ENCODE measurements at regions of chr15 and their contacts with region 1.

Region 1: GRCh38 chr15:92714477-92715401 is 59.2 kb upstream of the FAM174B start:
- DNase-seq: peak; percentile 58 to 83 (median 77)
- ATAC-seq: peak; percentile 93
- H3K4me3 ChIP-seq: peak overlapping the region; percentile 46 to 60
- H3K4me3 Mint-ChIP-seq: peak overlapping the region; percentile 79
- H3K27ac ChIP-seq: no peak overlapping the region
- H3K27ac Mint-ChIP-seq: no peak overlapping the region
- H3K4me1 ChIP-seq: peaks cover 9% of the 10 kb centered on the region
- H3K4me1 Mint-ChIP-seq: peaks cover 9% of the 10 kb centered on the region
- H3K27me3 ChIP-seq: no peaks in the 10 kb centered on the region
- H3K27me3 Mint-ChIP-seq: peaks cover 23% of the 10 kb centered on the region
- CTCF ChIP-seq: peak; percentile 88

Region 2: DNA sequence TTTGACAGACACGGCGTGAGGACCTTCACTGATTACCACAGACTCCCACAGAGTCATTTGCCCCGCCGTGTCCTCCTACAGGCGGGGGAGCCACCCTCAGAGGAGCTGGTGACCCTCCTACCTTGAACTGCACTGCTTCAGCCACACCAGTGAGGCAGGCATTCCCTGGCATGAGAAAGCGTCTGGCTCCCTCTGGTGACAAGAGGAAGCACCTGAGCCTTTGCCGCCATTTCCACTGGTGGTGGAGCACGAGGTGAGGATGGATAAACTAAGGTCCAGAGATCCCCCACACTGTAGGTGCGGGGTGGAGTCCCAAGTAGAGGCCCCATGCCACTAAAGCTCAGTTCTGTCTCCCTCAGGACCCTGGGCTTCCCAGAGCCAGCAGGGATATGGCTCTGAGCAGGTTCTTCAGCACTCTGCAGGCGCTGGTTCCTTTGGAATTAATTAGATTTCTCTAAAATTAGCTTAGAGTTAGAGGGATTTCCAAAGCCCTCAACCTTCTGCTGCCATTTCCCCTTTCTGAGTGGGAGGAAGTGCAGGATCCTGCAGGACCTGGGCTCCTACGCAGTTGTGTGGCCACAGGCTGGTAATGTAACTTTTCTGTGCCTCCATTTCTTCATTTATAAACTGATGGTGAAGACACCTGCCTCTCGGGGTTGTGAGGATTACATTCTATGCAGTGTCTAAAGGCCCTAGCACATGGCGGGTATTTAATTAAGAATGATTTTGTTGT is 637.2 kb before region 1 on chr15:
- CTCF ChIA-PET with region 1: no interaction called
- POLR2A ChIA-PET with region 1: no interaction called
- intact Hi-C with region 1: loop called in 1 of 2 experiments (anchors 5 kb)
- DNase-seq: peak in 8 of 9 experiments; percentile 35 to 67 (median 52)
- ATAC-seq: no peak
- H3K4me3 ChIP-seq: no peak overlapping the region
- H3K4me3 Mint-ChIP-seq: no peak overlapping the region
- H3K27ac ChIP-seq: no peak overlapping the region
- H3K27ac Mint-ChIP-seq: no peak overlapping the region
- H3K4me1 ChIP-seq: peaks cover 7% of the 10 kb centered on the region
- H3K4me1 Mint-ChIP-seq: peaks cover 23% of the 10 kb centered on the region
- H3K27me3 ChIP-seq: no peaks in the 10 kb centered on the region
- H3K27me3 Mint-ChIP-seq: no peaks in the 10 kb centered on the region
- CTCF ChIP-seq: peak; percentile 51

Region 3: DNA sequence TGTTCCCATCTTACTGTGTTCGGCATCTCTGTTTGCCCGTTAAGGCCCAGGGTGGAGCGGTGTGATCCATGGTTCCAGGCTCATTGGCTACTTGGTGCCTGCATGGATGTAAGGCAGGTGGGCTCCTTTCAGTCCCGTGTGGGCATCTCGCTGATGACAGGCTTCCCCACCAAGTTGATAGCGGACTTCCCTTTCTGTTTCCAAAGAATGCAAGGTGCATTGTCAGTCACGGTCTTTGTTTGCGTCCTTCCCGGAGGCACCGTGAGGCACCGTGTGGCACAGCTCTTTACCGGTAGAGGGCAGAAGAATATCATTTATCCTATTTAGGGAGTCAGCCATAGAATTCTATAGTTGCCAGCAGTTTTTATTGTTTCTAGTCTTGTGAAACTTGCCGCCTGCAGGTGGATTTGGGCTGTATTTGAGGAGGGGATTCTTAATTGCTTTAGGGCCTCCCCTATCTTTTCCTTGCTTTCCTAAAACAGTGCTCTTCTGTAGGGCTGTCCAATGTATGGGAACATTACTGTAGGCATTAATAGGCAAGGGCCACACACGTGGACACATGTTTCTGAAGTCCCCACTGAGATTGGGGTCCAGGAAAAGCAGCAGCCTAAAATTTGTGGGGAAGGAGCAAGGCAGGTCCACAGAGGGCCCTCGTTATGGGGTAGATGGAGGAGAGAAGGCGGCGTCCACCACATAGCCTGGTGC is 617.1 kb before region 1 on chr15:
- CTCF ChIA-PET with region 1: interaction called, 12 read pairs
- POLR2A ChIA-PET with region 1: no interaction called
- intact Hi-C with region 1: loop called in 1 of 2 experiments (anchors 1 kb)
- DNase-seq: peak in 7 of 9 experiments; percentile 13 to 68 (median 41)
- ATAC-seq: peak; percentile 48
- H3K4me3 ChIP-seq: no peak overlapping the region
- H3K4me3 Mint-ChIP-seq: peak overlapping the region; percentile 12
- H3K27ac ChIP-seq: no peak overlapping the region
- H3K27ac Mint-ChIP-seq: peak overlapping the region; percentile 25
- H3K4me1 ChIP-seq: peaks cover 26% of the 10 kb centered on the region
- H3K4me1 Mint-ChIP-seq: peaks cover 51% of the 10 kb centered on the region
- H3K27me3 ChIP-seq: no peaks in the 10 kb centered on the region
- H3K27me3 Mint-ChIP-seq: no peaks in the 10 kb centered on the region
- CTCF ChIP-seq: peak; percentile 61

Region 4: DNA sequence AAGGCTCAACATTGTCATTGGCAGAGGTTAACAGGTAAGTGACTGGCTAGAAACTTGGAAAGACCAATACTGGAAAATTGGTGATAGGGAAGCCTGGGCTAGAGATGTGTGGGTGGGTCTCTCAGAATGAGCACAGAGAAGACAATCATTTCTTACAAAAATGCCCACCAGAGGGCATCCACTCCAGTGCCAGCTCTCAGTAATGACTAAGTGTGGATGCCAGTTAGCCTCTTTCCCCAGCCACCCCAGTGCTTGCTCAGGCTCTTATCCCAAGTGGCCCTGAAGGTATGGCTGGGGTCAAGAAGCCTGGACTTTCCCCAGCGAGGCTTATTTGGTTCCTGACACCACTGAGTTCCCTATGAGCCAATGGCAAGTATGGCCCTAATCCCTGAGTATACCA is 437.0 kb before region 1 on chr15:
- CTCF ChIA-PET with region 1: interaction called, 3 read pairs
- POLR2A ChIA-PET with region 1: no interaction called
- intact Hi-C with region 1: loop called in 1 of 2 experiments (anchors 2 kb)
- DNase-seq: peak in 2 of 9 experiments; percentile 2 to 17
- ATAC-seq: no peak
- H3K4me3 ChIP-seq: no peak overlapping the region
- H3K4me3 Mint-ChIP-seq: no peak overlapping the region
- H3K27ac ChIP-seq: no peak overlapping the region
- H3K27ac Mint-ChIP-seq: no peak overlapping the region
- H3K4me1 ChIP-seq: no peaks in the 10 kb centered on the region
- H3K4me1 Mint-ChIP-seq: no peaks in the 10 kb centered on the region
- H3K27me3 ChIP-seq: no peaks in the 10 kb centered on the region
- H3K27me3 Mint-ChIP-seq: peaks cover 12% of the 10 kb centered on the region
- CTCF ChIP-seq: no peak

Region 5: DNA sequence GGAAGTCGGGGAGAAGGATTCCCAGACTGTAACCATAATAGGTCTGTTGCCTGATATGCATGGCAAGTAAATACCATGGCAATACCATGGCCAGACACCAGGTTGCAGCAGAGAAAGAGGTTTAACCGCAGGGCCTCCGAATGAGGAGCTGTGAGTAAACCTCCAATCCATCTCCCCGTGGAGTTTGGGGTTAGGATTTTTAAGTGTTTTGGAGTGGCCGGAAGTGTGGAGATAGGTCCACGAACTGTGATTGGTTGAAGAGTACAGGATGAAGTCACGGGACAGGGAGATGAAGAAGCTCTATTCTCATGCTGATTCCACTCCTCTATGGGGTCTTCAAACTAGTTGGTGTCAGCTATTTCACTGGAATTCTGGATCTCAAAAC is 193.1 kb before region 1 on chr15:
- CTCF ChIA-PET with region 1: interaction called, 20 read pairs
- POLR2A ChIA-PET with region 1: interaction called, 4 read pairs
- intact Hi-C with region 1: loop called in 1 of 2 experiments (anchors 1 kb)
- DNase-seq: peak in 8 of 9 experiments; percentile 5 to 55 (median 32)
- ATAC-seq: peak; percentile 52
- H3K4me3 ChIP-seq: no peak overlapping the region
- H3K4me3 Mint-ChIP-seq: no peak overlapping the region
- H3K27ac ChIP-seq: no peak overlapping the region
- H3K27ac Mint-ChIP-seq: no peak overlapping the region
- H3K4me1 ChIP-seq: no peaks in the 10 kb centered on the region
- H3K4me1 Mint-ChIP-seq: peaks cover 2% of the 10 kb centered on the region
- H3K27me3 ChIP-seq: no peaks in the 10 kb centered on the region
- H3K27me3 Mint-ChIP-seq: no peaks in the 10 kb centered on the region
- CTCF ChIP-seq: peak; percentile 28

Region 6: DNA sequence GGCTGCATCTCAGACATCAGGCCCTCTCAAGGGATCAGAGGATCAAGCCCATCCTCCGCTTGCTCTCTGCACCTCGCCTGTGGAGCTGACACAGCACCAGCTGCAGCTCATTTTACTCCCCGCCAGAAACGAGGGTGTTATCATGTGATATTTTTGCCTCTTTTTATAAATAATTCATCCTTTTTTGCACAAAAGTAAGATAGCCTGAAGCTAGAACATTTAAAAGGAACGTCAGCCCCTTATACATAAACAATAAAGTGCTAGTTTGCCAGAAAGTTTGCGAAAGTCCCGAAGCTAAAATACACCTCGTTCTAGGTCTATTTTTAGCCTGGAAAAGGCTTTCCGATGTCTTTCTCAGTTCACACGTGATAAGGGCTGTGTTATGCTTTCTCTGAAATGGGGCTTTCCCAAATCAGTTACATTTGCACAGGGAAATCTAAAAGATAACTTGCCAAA is 49.6 kb before region 1 on chr15:
- CTCF ChIA-PET with region 1: no interaction called
- POLR2A ChIA-PET with region 1: no interaction called
- intact Hi-C with region 1: no loop called
- DNase-seq: no peak
- ATAC-seq: no peak
- H3K4me3 ChIP-seq: no peak overlapping the region
- H3K4me3 Mint-ChIP-seq: no peak overlapping the region
- H3K27ac ChIP-seq: no peak overlapping the region
- H3K27ac Mint-ChIP-seq: no peak overlapping the region
- H3K4me1 ChIP-seq: no peaks in the 10 kb centered on the region
- H3K4me1 Mint-ChIP-seq: no peaks in the 10 kb centered on the region
- H3K27me3 ChIP-seq: no peaks in the 10 kb centered on the region
- H3K27me3 Mint-ChIP-seq: peaks cover 9% of the 10 kb centered on the region
- CTCF ChIP-seq: no peak

Region 7: DNA sequence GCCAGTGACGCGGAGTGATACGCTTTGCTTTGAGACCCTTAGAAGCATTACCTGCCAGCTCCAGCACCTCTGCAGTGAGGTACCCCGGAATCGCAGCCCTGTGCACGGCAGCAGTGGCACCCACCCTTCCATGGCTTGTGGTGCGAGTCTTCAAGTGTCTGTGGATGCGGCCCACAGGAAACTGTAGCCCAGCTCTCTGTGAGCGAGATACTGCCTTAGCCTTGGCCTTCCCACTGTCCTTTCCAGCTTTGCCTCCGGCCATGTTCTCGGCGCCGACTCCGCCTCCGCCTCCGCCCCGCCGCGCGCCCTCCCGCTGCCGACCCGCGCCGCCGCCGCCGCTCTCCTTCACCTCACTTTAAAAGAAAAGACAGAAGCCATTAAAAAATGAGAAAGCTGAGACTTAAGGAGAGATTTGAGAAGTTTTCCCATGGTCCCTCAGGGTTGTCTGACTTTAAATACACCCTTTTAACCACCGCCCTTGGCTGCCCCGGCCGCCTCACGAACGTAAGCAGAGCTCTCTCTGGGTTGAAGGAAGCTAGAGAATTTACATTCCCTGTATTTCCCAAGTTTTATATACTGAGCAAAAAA is 19.3 kb after region 1 on chr15:
- CTCF ChIA-PET with region 1: interaction called, 14 read pairs
- POLR2A ChIA-PET with region 1: no interaction called
- intact Hi-C with region 1: no loop called
- DNase-seq: peak in 6 of 9 experiments; percentile 14 to 62 (median 28)
- ATAC-seq: peak; percentile 64
- H3K4me3 ChIP-seq: peak overlapping the region; percentile 57 to 70
- H3K4me3 Mint-ChIP-seq: peak overlapping the region; percentile 88
- H3K27ac ChIP-seq: peak overlapping the region; percentile 44 to 60
- H3K27ac Mint-ChIP-seq: peak overlapping the region; percentile 72
- H3K4me1 ChIP-seq: no peaks in the 10 kb centered on the region
- H3K4me1 Mint-ChIP-seq: peaks cover 13% of the 10 kb centered on the region
- H3K27me3 ChIP-seq: no peaks in the 10 kb centered on the region
- H3K27me3 Mint-ChIP-seq: peaks cover 11% of the 10 kb centered on the region
- CTCF ChIP-seq: no peak

Measured in CD8-positive, alpha-beta T cell (primary cell).